Right ventricle myocardium inferior (tissue), 1 donor: ENCODE measurements at regions of chr4 and their contacts with region 1.

Region 1: DNA sequence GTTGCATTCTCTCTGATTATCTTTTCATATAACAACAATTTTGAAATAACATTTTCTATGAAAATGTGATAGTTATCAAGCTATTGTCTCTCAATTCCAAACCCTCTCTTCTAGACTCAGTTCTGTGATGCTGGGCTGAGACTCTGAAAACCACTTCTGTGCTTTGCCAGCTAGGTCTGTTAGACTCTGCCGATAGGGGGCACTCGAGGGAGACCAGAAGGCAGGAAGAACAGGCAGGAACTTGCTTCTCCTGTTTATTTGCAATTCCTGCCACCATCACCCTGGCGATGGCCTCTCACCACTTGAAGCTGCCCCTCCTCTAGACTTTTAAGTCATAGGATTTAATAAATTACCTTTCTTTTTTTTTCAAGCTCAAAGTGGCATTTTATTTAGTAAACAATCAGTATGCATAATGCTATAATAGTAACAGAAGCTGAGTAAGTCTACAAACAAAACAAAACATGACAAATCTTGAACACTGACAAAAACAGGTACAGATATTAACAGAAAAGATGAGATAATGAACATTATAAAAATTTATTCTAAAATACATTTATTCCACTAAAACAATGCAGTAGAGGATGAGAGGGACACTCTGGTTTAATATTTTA is 49.7 kb downstream of the RASL11B start:
- DNase-seq: no peak
- ATAC-seq: no peak

Region 2: DNA sequence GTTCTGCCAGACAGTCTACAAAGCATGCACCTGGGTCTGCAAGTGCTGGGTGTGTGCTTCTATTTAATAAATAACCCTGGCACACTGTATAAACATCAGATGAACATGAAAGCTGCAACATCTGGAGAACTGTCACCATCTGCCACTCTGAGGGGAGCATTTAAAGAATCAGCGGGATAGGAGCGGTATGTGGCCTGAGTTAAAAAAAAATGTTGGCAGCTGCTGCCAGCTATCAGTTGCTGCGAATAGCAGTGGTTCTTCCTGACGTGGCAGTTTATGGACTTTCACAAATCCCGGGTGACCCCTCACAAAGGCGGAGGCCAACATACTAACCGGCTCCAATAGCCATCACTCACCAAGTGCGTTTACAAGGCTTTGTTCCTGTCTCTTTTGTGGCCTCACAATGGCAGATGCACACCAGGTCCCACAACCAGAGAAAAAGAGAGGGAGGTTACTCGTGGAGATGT is 45.5 kb after region 1 on chr4:
- intact Hi-C with region 1: loop called (anchors 5 kb)
- DNase-seq: no peak
- ATAC-seq: peak; percentile 66

Region 3: GRCh38 chr4:53055274-53055673 is 143.5 kb after region 1 on chr4:
- intact Hi-C with region 1: no loop called
- DNase-seq: no peak
- ATAC-seq: peak; percentile 11